Mammary epithelial cell (primary cell): ENCODE measurements at regions of chr2 and their contacts with region 1.

Region 1: DNA sequence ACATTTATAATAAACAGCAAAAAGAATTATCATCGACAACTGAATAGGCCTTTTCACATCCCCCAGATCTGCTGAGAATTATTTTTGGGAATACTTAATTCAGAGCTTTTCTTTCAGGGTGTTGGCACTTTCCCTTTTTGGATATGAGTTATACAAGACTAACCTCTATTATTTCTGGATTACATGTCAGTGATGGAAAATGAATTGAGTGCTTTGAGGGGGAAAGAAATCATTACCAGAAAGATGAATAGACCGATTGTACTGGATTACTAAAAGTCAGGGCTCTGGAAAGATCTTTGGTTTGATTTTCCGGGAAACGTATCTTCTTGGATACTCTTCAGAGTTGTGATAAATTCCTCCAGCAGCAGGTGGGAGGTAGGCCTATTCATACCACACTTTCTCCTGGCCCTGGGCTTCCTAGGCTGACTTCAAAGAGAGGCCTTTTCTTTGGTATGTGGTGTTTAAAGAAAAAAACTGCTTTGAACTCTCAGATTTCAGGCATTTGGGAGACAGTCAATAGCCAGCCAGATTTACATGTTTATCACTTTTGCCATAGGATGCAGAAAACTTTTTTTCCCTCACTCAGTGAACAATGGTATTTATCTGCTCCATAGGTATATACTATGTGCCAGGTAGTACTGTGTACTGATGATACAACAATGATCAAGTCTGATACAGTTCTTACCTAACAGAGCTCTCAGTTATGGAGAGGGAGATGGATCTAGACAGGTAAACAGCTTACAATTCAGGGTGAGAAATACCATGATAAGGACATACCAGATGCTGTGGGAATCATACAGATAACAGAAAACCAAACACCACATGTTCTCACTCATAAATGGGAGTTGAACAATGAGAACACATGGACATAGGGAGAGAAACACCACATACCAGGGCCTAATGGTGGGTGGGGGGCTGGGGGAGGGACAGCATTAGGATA is 63.3 kb upstream of the ACTR3 start:
- DNase-seq: no peak
- H3K4me3 ChIP-seq: no peak overlapping the region
- H3K27ac ChIP-seq: no peak overlapping the region
- H3K4me1 ChIP-seq: peaks cover 15% of the 10 kb centered on the region
- H3K27me3 ChIP-seq: no peaks in the 10 kb centered on the region
- CTCF ChIP-seq: no peak

Region 2: DNA sequence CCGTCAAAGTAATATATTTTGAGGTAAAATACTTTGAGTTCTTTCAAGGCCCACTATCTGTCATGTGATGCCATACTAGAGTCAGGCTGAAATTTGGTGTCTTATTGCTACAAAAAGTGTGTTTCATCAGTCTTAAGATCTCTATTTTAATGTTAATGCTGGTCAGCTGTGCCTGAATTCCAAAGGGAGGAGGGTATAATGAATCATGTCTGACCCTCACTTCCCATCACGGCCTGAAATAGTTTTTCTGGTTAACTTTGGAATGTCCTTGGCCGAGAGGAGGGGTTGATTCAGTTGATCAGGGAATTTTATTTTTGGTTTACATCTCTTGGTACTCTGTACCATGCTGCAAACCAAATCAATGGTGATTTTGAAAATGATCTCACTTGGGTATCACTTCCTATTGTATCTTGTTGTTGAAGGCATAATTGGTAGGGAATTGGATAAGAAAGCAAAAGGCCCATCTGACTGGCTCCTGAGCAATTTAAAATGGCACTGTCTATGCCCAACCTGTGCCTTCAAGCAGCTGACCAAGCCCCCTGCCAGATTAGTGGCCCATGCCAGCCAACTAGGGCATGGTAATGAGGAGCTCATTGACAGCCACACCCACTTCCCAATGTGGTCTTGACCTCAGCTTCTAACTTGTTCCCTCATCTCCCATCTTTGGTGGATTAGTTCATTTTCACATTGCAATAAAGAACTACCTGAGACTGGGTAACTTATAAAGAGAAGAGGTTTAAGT is 64.1 kb before region 1 on chr2:
- CTCF ChIA-PET with region 1: no interaction called
- dilution Hi-C with region 1: loop called (anchors 5 kb)
- in situ Hi-C with region 1: no loop called
- intact Hi-C with region 1: no loop called
- DNase-seq: peak; percentile 19
- H3K4me3 ChIP-seq: no peak overlapping the region
- H3K27ac ChIP-seq: no peak overlapping the region
- H3K4me1 ChIP-seq: peaks cover 3% of the 10 kb centered on the region
- H3K27me3 ChIP-seq: no peaks in the 10 kb centered on the region
- CTCF ChIP-seq: no peak

Region 3: DNA sequence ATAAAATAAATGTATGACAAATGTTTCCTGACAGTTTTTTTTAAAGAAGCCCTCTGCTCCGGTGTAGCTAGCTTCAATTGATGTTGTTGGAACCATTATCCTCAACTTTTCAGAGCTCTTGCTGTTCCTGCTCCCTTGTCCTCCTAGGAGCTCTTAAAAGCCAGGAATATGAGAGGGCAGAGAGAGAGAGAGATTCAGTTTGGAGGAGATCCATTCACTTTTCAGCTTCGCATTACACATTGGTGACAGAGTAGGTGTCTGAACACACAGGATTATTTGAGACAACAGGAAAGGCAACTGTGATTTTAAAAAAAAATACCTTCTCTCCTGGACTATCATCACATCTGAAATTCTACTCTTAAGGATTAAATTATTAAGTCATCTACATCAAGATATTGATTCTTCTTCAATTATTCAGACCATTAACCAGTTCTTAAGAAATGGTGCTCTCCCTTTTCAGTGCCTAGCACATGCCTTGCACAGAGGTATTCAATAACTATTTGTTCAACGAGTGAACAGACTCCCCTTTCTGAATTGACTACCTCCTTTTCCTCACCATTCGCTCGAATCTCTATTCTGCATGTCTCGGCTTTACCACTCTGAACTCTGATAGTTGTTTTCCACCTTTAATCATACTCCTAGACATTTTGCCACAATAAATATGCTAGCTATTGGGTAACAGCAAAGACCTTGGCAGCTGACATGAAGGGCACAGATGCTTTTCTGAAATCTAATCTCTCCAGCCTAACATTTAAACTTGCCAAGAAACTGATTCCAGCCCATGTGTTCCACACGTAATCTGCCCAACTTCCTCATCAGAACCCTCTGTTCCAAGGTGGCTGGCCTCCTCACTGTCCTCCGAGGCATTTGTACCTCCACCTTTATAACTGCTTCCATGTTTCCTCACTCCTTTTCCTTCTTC is 41.5 kb before region 1 on chr2:
- CTCF ChIA-PET with region 1: no interaction called
- dilution Hi-C with region 1: loop called (anchors 5 kb)
- in situ Hi-C with region 1: no loop called
- intact Hi-C with region 1: no loop called
- DNase-seq: no peak
- H3K4me3 ChIP-seq: no peak overlapping the region
- H3K27ac ChIP-seq: no peak overlapping the region
- H3K4me1 ChIP-seq: no peaks in the 10 kb centered on the region
- H3K27me3 ChIP-seq: no peaks in the 10 kb centered on the region
- CTCF ChIP-seq: no peak

Region 4: DNA sequence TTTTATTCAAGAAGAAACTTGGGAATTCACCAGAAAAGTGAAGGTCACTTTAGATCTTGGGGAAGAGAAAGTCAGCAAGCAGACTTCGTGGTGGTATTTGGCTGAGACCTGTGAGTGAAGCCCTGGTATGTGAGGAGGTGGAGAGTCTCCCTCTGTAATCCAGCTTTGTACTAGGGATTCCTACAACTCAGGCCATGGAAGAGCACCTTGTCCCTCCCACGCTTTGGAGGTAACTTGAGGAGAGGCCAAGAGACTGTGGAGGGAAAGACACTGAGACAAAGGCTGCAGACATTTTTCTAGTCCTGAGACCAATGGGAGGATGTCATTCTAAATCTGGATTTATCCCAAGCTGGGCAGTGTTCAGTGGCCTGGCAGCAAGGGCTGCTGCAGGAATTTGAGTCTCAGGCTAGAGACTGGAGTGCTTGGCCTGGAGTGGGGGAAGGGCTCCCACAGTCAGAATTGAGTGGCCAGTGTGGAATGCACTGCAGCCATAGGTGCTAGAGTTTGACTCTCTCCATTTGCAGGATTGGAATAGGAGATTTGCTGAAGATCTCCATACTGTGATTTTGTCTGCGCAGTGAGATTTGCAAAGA is 282.3 kb after region 1 on chr2:
- CTCF ChIA-PET with region 1: no interaction called
- dilution Hi-C with region 1: no loop called
- in situ Hi-C with region 1: no loop called
- intact Hi-C with region 1: no loop called
- DNase-seq: no peak
- H3K4me3 ChIP-seq: no peak overlapping the region
- H3K27ac ChIP-seq: no peak overlapping the region
- H3K4me1 ChIP-seq: no peaks in the 10 kb centered on the region
- H3K27me3 ChIP-seq: no peaks in the 10 kb centered on the region
- CTCF ChIP-seq: no peak